AG04449 (cell line): ENCODE measurements at regions of chr5 and their contacts with region 1.

Region 1: DNA sequence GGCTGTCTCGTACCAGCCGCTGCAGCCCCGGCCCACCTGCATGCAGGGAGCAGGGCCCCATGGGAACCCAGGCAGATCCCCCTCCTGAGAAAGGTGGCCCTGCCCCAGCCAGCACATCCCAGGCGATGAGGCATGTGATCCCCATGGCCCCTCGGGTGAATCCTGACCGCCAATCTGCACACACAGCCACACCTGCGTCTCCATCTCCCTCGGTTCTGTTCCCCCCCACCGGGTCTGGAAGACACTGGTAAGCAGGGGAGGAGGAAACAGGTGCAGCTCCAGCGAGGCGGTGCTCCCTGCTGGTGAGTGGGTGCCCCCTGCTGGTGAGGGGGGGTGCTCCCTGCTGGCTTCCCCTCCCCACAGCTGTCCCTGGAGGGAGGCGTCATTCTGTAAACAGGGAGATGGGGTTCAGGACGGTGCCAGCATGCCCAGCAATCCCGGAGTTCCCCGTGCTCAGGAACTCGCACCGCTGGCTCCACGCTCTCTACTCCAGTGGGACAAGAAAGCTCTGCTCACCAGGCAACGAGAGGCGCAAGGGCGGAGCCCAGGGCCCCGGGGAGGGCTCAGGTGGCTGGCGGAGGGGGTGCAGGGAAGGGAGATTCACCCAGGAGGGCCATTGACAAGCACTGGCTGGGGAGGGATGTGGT is 28.4 kb upstream of the SLC12A7 start:
- DNase-seq: no peak
- H3K4me3 ChIP-seq: no peak overlapping the region
- CTCF ChIP-seq: peak; percentile 68

Region 2: DNA sequence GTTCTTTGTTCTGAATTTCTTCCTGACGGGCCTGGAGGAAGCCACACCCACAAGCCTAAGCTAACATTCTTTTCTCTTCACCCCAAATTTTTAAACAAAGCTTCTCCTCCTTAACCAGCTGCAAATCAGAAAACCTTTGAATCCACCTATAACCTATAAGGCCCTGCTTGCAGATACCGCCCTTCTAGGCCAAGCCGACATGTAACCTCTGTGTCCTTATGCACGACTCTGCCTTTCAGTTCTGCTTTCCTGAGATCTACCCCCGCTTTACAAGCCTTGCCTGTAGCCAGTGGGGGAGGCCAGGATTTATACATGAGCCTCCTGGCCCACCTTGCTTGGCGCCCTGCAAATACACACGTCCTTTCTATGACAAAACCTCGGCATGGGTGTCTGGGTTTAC is 267.0 kb before region 1 on chr5:
- CTCF ChIA-PET with region 1: no interaction called
- POLR2A ChIA-PET with region 1: no interaction called
- DNase-seq: no peak
- H3K4me3 ChIP-seq: no peak overlapping the region
- CTCF ChIP-seq: no peak

Region 3: DNA sequence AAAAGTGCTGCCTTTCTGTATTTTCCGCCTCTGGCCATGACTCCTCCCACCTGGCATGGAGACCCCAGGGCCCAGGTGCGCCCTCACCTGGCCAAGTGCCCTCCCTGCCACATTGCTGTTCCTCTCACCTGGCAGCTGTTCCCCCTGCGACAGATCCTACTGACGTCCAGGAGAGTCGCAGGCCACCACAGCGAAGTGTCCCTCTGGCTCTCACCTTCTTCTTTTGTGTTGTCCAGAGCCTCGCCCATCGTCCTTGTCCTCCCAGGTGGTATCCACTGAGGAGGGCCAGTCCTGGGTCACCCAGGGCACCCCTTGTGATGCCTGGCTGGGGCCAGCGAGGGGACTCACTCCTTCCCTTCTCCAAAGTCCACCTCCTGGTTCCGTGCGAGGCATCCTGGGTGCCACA is 129.1 kb before region 1 on chr5:
- CTCF ChIA-PET with region 1: no interaction called
- POLR2A ChIA-PET with region 1: no interaction called
- DNase-seq: no peak
- H3K4me3 ChIP-seq: no peak overlapping the region
- CTCF ChIP-seq: peak; percentile 24

Region 4: GRCh38 chr5:1152156-1152555 is 11.9 kb after region 1 on chr5:
- CTCF ChIA-PET with region 1: interaction called, 10 read pairs
- POLR2A ChIA-PET with region 1: no interaction called
- DNase-seq: no peak
- H3K4me3 ChIP-seq: no peak overlapping the region
- CTCF ChIP-seq: no peak